ENCODE measurements at regions of chr18 and their contacts with region 1.

Region 1: GRCh38 chr18:35972197-35973052 is at the start of gene RMP24:
- DNase-seq: peak; percentile 91 to 94 (median 93)
- H3K4me3 ChIP-seq: peak within 1 kb of the TSS; percentile 84 to 92
- H3K4me3 Mint-ChIP-seq: peak within 1 kb of the TSS; percentile 91 to 98 (median 96)
- H3K27ac ChIP-seq: peak within 1 kb of the TSS; percentile 72
- H3K27ac Mint-ChIP-seq: peak within 1 kb of the TSS; percentile 92 to 99 (median 98)
- H3K4me1 ChIP-seq: peaks cover 51% of the 10 kb centered on the region
- H3K4me1 Mint-ChIP-seq: peaks cover 38 to 66% (median 52%) of the 10 kb centered on the region in 4 donors
- H3K27me3 ChIP-seq: no peaks in the 10 kb centered on the region
- H3K27me3 Mint-ChIP-seq: no peaks in the 10 kb centered on the region

Region 2: DNA sequence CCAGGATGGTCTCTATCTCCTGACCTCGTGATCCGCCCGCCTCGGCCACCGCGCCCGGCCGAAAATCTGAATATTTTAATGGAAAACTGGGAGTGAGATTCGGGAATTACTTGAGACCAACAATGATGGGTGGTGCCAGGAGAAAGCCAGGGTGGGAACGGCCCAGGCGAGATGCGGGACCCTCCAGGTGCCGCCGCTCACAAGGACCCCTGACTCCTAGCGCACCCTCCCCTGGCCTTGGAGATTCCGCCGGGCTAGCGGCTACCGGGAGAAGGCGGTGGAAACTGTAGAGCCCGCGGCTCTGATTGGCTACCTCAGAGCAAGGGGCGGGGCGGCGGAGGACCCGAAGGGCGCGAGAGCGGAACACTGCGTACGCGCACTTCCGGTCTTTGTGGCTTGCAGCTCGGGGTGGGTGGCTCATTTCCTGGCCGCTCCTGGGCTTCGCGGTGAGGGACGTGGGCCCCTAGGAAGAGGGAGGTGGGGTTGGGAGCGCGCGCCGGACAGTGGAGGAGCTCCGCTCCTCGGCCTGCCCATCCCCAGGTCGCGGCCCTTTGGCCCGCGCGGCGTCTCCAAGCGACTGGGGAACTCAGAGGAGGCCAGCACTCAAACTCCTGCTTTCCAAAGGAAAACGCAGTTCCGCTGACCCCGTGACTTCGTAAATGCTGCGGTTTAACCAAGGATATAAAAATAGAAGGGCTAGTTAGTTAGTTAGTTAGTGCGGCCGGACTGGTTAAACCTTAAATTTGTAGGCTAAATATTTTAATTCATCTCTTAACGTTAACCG is 731.6 kb before region 1 on chr18 and contains the start of gene ZNF397:
- CTCF ChIA-PET with region 1: no interaction called
- POLR2A ChIA-PET with region 1: interaction called, 6 read pairs
- intact Hi-C with region 1: loop called (anchors 1 kb)
- DNase-seq: peak; percentile 91 to 94 (median 92)
- H3K4me3 ChIP-seq: peak within 1 kb of the TSS; percentile 81 to 90
- H3K4me3 Mint-ChIP-seq: peak within 1 kb of the TSS; percentile 96 to 98 (median 96)
- H3K27ac ChIP-seq: peak within 1 kb of the TSS; percentile 95
- H3K27ac Mint-ChIP-seq: peak within 1 kb of the TSS; percentile 94 to 100 (median 99)
- H3K4me1 ChIP-seq: peaks cover 17% of the 10 kb centered on the region
- H3K4me1 Mint-ChIP-seq: peaks cover 10 to 40% (median 15%) of the 10 kb centered on the region in 4 donors
- H3K27me3 ChIP-seq: no peaks in the 10 kb centered on the region
- H3K27me3 Mint-ChIP-seq: no peaks in the 10 kb centered on the region
- total RNA-seq, gene ZNF397: 56.1 to 58.5 TPM

Region 3: DNA sequence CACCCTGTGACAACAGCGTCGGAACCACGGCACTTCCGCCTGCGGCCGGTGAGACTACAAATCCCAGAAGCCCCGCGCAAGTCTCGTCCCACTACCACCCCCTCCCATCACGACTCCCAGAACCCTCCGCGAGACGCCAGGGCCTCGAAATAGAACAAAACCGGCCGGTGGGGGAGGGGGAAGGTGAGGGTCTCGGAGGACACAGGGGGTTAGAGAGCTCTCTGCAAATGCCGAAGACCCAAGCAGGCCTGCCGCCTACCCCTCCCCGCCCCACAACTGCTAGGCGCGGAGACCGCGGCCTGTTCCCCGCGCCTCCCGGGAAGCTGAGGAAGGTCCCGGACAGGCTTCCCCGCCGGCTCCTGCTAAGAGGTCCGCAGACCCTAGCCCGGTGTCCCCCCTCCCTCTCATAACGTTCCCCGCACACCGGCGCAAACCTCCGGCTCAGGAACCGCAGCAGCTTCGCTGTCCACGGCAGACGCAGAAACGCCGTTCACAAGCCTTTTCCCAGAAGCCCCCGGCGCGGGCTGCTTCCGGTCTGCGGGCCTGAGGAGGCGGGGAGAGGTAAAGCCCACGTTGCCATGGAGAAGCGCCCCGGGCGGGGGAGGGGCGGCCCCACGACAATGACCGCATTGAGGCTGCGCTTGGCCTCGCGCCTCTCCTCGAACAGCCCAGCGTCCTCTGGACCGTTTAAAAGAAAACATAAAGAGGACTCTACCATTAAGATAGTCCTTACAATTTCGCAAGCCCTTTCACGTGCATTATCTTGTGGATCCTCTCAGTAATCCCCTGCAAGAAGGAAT is 628.3 kb before region 1 on chr18 and contains the start of gene ZNF24:
- CTCF ChIA-PET with region 1: no interaction called
- POLR2A ChIA-PET with region 1: interaction called, 6 read pairs
- intact Hi-C with region 1: loop called (anchors 1 kb)
- DNase-seq: peak; percentile 89 to 95 (median 89)
- H3K4me3 ChIP-seq: peak within 1 kb of the TSS; percentile 87 to 96
- H3K4me3 Mint-ChIP-seq: peak within 1 kb of the TSS; percentile 94 to 99 (median 98)
- H3K27ac ChIP-seq: peak within 1 kb of the TSS; percentile 99
- H3K27ac Mint-ChIP-seq: peak within 1 kb of the TSS; percentile 96 to 99 (median 98)
- H3K4me1 ChIP-seq: peaks cover 45% of the 10 kb centered on the region
- H3K4me1 Mint-ChIP-seq: peaks cover 32 to 58% (median 44%) of the 10 kb centered on the region in 4 donors
- H3K27me3 ChIP-seq: no peaks in the 10 kb centered on the region
- H3K27me3 Mint-ChIP-seq: no peaks in the 10 kb centered on the region
- total RNA-seq, gene ZNF24: 89.1 to 90.5 TPM

Region 4: DNA sequence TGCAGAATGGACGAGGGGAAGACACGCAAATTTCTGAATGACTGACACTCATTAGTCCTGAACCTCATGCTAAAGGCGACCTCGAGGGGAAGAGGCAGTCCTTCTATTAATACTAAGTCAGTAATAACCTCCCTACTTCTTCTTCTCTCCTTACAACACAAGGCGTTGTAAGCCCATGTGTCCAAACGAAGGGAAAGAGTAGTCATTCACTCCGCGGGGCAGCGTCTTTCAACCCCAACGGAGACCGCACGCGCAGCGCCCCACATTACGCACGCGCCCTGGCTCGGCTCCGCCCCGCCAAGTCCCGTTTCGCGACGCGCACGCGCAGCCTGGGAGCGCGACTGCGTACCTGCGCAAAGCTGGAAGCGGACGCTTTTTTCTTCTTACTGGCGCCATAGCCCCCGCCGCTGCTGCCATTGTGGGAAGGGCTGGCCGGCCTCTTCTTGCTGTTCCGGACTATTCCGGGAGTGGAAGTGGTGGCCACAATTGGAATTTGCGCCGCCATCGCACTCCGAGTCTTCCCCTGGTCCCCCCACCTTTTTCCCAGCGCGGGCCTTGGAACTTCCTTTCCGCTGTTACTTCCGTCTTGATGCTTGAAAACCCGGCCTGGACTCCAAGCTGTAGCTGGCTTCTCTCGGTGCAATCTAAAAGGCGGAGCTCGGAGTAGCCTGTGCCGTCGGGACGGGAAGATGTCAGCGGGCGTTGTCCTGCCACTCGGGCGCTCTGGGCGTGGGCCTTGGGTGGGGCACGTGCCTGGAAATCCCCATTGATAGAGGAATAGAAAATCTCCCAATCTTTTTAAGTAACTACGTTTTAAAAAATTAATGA is 474.8 kb before region 1 on chr18 and contains the start of gene INO80C:
- CTCF ChIA-PET with region 1: no interaction called
- POLR2A ChIA-PET with region 1: interaction called, 16 read pairs
- intact Hi-C with region 1: loop called (anchors 1 kb)
- DNase-seq: peak; percentile 92 to 94 (median 93)
- H3K4me3 ChIP-seq: peak within 1 kb of the TSS; percentile 94 to 96
- H3K4me3 Mint-ChIP-seq: peak within 1 kb of the TSS; percentile 95 to 99 (median 96)
- H3K27ac ChIP-seq: peak within 1 kb of the TSS; percentile 84
- H3K27ac Mint-ChIP-seq: peak within 1 kb of the TSS; percentile 98 to 100 (median 100)
- H3K4me1 ChIP-seq: peaks cover 23% of the 10 kb centered on the region
- H3K4me1 Mint-ChIP-seq: peaks cover 14 to 39% (median 28%) of the 10 kb centered on the region in 4 donors
- H3K27me3 ChIP-seq: no peaks in the 10 kb centered on the region
- H3K27me3 Mint-ChIP-seq: no peaks in the 10 kb centered on the region
- total RNA-seq, gene INO80C: 27.3 to 30.3 TPM

Region 5: GRCh38 chr18:36067055-36067957 is 94.9 kb after region 1 on chr18 and contains the start of gene RPRD1A:
- CTCF ChIA-PET with region 1: no interaction called
- POLR2A ChIA-PET with region 1: interaction called, 17 read pairs
- intact Hi-C with region 1: loop called (anchors 1 kb)
- DNase-seq: peak; percentile 94 to 97 (median 94)
- H3K4me3 ChIP-seq: peak within 1 kb of the TSS; percentile 81 to 87
- H3K4me3 Mint-ChIP-seq: peak within 1 kb of the TSS; percentile 92 to 98 (median 95)
- H3K27ac ChIP-seq: peak within 1 kb of the TSS; percentile 74
- H3K27ac Mint-ChIP-seq: peak within 1 kb of the TSS; percentile 89 to 98 (median 96)
- H3K4me1 ChIP-seq: peaks cover 32% of the 10 kb centered on the region
- H3K4me1 Mint-ChIP-seq: peaks cover 31 to 48% (median 40%) of the 10 kb centered on the region in 4 donors
- H3K27me3 ChIP-seq: no peaks in the 10 kb centered on the region
- H3K27me3 Mint-ChIP-seq: peaks cover 0 to 1% of the 10 kb centered on the region in 2 donors
- total RNA-seq, gene RPRD1A: 40.1 to 42.3 TPM

Region 6: GRCh38 chr18:36120300-36120778 is 147.9 kb after region 1 on chr18:
- CTCF ChIA-PET with region 1: no interaction called
- POLR2A ChIA-PET with region 1: no interaction called
- intact Hi-C with region 1: no loop called
- DNase-seq: no peak
- H3K4me3 ChIP-seq: no peak overlapping the region
- H3K4me3 Mint-ChIP-seq: no peak overlapping the region
- H3K27ac ChIP-seq: no peak overlapping the region
- H3K27ac Mint-ChIP-seq: peak overlapping the region in 1 of 7 donors; percentile 35
- H3K4me1 ChIP-seq: no peaks in the 10 kb centered on the region
- H3K4me1 Mint-ChIP-seq: peaks cover 0 to 6% (median 3%) of the 10 kb centered on the region in 4 donors
- H3K27me3 ChIP-seq: no peaks in the 10 kb centered on the region
- H3K27me3 Mint-ChIP-seq: no peaks in the 10 kb centered on the region

Region 7: DNA sequence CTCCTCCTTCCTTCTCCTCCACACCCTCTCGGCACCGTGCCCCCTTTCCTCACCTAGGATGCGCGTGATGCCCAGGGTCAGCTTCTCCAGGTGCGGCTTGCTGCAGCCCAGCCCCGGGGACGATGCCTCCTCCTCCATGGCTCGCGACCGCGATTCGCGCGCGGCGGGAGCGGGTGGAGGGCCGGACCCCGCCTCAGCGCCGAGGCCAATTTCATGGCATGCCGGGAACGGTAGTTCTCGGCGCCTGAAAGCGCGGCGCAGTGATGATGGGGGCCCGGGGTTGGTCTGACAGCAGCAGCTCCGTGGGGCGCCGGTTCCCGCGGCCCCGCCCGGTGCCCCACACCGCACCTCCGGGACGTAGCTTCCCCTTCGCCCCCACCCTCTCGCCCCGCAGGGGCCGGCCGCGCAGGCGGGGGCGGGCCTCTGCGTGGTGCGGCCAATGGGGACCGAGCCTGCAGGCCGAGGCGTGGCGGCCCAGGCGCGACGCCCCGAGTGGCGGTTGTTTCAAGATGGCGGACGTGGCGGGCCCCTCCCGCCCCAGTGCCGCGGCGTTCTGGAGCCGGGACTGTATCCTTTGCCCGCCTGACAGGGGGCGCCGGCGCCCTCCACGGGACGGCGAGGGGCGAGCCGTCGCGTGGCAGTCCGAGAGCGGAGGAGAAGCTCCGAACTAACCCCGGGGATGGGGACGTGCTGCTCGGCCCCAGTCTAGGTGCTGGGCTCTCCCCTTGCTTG is 856.4 kb after region 1 on chr18 and contains the starts of genes KIAA1328 and TPGS2:
- CTCF ChIA-PET with region 1: no interaction called
- POLR2A ChIA-PET with region 1: interaction called, 12 read pairs
- intact Hi-C with region 1: loop called (anchors 1 kb)
- DNase-seq: peak; percentile 85 to 91 (median 90)
- H3K4me3 ChIP-seq: peak within 1 kb of the TSS; percentile 94 to 99
- H3K4me3 Mint-ChIP-seq: peak within 1 kb of the TSS; percentile 84 to 97 (median 90)
- H3K27ac ChIP-seq: peak within 1 kb of the TSS; percentile 82
- H3K27ac Mint-ChIP-seq: peak within 1 kb of the TSS; percentile 80 to 96 (median 94)
- H3K4me1 ChIP-seq: peaks cover 26% of the 10 kb centered on the region
- H3K4me1 Mint-ChIP-seq: peaks cover 22 to 55% (median 36%) of the 10 kb centered on the region in 4 donors
- H3K27me3 ChIP-seq: no peaks in the 10 kb centered on the region
- H3K27me3 Mint-ChIP-seq: no peaks in the 10 kb centered on the region
- total RNA-seq, gene KIAA1328: 12.3 to 15.7 TPM
- total RNA-seq, gene TPGS2: 51.6 to 54.7 TPM

Measured in CD4-positive, alpha-beta memory T cell (primary cell).